Right ventricle myocardium inferior (tissue), 1 donor: ENCODE measurements at regions of chr3 and their contacts with region 1.

Region 1: DNA sequence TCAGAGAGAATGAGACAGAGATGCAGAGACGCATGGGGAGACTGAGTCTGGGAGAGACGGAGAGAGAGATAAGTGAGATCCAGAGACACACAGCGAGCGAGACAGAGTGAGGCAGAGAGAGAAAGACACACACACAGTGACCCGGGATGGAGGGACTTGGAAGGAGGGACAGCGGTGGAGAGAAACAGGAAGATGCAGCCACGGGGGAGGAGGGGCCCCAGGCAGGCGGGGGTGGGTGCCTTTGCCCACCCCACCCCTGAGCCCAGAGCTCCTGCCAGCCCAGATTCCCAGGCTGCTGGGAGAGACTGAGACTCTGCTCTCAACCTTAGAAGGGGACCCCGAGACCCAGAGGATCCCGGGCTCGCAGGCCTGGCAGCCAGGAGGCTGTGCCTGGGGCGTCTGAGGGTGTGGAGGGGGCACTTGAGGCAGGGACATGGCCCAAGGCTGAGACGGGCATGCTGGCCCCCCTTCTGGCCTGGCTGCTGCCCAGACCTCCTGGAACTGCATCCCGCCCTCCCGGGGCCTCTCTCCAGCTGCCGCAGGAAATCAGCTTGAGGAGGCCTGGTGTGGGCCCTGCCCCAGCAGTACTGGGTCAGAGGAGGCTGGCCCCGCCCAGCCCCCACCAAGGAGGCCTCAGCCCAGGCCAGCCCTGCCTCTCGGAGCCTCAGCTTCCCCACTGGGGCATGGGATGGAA is 18.1 kb downstream of the H1-8 start:
- DNase-seq: peak; percentile 90
- ATAC-seq: peak; percentile 86

Region 2: GRCh38 chr3:129501630-129502029 is 59.4 kb before region 1 on chr3:
- intact Hi-C with region 1: loop called (anchors 2 kb)
- DNase-seq: no peak
- ATAC-seq: no peak

Region 3: DNA sequence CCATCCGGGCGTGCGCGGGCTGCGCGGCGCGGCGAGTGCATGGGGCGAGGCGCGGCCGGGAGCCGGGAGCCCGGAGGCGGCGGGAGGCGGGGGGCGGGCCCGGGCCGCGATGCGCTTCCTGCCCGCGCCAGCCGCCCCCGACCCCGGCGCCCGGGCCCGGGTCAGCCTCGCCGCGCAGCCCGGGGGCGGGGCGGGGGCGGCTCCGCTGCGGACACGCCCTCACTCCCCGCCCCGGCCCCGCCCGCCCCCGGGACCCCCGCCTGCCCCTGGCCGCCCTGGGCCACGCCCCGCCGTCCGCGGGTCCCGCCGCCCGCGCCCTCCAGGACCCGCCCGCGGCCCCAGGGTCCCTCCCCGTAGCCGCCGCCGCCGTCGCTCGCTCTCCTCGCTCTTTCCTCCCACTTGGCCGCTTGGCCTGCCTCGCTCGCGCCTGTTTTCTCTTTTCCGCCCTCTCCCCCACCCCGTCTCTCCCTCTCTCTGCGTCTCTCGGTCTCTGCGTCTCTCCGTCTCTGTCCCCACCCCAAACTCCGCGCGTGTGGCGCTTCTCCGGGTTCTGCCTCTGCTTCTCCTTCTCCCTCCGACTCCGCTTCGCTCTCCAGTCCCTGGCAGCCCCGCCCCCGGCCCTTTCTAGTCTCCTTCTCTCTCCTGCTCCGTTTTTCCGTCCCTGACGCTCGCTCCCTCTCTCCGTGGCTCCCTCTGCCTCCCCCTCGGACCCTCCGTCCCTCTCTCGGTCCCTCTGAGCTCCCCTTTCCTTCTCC is 45.8 kb after region 1 on chr3 and contains the start of gene PLXND1:
- intact Hi-C with region 1: loop called (anchors 2 kb)
- DNase-seq: peak; percentile 90
- ATAC-seq: peak; percentile 79
- total RNA-seq, gene PLXND1: 66.3 TPM